Right lobe of liver (tissue), 6 donors: ENCODE measurements at regions of chrX and their contacts with region 1.

Region 1: DNA sequence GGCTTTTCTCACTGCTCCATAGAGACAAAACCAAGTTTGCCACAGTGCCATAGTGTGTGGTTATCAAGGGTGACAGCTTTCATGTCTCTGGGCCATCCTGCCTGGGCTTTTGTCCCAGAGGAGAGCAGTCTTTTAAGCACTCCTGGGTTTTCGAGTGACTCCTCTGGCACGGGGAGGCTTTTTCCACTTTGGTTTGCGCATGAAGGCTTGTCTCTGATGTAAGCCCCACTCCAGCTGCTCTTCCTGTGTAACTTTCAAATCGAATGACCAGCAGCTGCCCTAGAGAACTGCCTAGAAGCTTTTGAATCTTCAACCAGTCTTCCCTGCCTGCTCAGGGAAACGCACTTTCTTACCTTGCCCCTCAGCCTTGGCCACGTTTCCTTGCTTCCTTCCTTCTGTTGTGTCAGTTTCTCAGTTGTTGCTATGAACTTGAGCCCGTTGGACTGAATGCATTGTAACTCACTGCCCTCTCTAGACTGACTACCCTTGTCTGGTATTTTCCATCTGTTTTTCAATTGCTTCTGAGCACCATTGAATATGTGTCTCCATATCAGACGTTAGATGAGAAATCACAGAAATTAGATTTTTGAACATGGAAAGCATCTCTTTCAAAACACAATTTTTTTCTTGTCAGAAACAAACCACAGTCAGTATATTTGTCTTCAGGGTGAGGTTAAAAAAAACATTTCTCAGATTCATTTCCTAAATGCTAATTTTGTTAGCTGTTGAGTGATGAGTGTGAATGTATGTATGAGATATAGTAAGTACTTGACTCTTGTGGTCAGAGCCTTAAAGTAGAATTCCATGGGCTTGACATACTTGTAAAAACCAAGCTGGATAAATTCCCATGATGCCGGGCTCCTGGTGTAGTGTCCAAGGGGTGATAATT is 45.3 kb downstream of the SLC9A6 start:
- DNase-seq: no peak
- ATAC-seq: peak; percentile 29 to 70 (median 48)
- H3K4me3 ChIP-seq: no peak overlapping the region
- H3K27ac ChIP-seq: peak overlapping the region in 1 of 3 donors; percentile 3
- H3K4me1 ChIP-seq: no peaks in the 10 kb centered on the region
- H3K27me3 ChIP-seq: no peaks in the 10 kb centered on the region
- CTCF ChIP-seq: no peak
- POLR2A ChIP-seq: no peak

Region 2: DNA sequence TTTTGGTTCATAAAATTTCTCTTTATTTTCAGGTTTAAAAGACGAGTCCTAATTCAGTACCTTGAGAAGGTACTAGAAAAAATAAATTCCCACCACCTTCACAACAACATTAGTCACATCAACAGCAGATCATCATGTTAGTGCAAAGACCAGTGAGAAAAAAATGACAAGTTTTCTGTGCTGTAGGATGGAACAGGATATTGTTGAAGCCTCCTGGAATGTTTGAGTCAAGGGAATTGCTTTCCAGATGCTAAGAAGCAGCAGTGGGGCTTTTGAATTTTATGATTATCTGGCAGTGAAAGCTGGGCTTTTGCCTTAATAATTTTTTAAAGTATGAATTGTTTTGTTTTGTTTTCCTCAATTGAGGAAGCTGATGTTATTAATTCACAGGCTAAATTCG is 449.1 kb before region 1 on chrX:
- intact Hi-C with region 1: no loop called
- DNase-seq: no peak
- ATAC-seq: no peak
- H3K4me3 ChIP-seq: no peak overlapping the region
- H3K27ac ChIP-seq: no peak overlapping the region
- H3K4me1 ChIP-seq: no peaks in the 10 kb centered on the region
- H3K27me3 ChIP-seq: no peaks in the 10 kb centered on the region
- CTCF ChIP-seq: no peak
- POLR2A ChIP-seq: no peak

Region 3: DNA sequence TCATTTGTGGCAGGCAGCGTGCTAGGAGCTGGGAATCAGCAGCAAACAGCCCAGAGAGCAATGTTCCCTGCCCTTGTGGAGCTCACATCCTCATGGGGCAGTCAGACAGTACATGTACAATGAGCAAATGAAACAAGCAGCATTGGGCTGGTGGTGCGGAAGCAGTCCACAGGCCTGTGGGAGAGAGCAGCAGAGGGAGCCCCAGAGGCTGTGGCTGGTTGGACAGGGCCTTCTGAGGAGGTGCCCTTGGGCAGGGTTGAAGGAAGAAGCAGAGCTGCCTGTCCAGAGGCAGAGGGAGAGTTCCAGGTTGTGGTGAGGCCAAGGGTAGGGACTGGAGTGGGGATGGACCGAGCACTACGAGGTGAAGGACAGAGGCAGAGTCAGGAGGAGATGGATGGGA is 79.3 kb before region 1 on chrX:
- intact Hi-C with region 1: no loop called
- DNase-seq: no peak
- ATAC-seq: peak in 1 of 4 donors; percentile 17
- H3K4me3 ChIP-seq: no peak overlapping the region
- H3K27ac ChIP-seq: no peak overlapping the region
- H3K4me1 ChIP-seq: no peaks in the 10 kb centered on the region
- H3K27me3 ChIP-seq: peaks cover 0 to 2% of the 10 kb centered on the region in 2 donors
- CTCF ChIP-seq: no peak
- POLR2A ChIP-seq: no peak

Region 4: DNA sequence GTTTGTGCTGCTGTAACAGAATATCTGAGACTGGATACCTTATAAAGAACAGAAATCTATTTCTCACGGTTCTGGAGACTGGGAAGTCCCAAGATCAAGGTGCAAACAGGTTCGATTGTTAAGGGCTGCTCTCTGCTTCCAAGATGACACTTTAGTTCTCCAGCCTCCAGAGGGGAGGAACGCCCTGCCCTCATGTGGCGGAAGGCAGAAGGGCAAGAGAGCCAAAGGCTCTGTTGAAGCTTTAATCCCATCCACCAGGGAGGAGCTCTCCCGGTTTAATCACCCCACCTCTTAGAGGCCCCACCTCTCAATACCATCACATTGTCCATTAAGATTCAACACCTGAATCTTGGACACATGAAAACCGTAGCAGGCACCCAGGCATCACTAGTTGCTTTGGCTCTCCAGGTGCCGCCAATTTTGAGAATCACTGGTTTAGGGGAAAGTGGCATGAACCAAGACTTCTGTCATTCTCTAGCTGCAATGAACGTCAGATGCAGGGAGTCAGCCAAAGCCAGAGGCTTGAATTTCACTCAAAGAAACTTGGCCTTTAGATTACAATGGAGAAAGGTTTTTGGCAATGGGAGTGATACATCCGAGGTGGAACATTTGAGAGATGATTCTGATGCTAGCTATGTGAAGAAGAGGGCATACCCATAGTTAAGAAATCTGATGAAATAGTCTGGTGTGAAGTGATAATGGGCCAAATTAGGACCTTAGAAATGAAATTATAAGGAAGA is 132.5 kb after region 1 on chrX:
- intact Hi-C with region 1: loop called in 1 of 2 experiments (anchors 10 kb)
- DNase-seq: peak in 2 of 3 donors; percentile 52 to 57
- ATAC-seq: peak; percentile 75 to 83 (median 78)
- H3K4me3 ChIP-seq: no peak overlapping the region
- H3K27ac ChIP-seq: no peak overlapping the region
- H3K4me1 ChIP-seq: no peaks in the 10 kb centered on the region
- H3K27me3 ChIP-seq: no peaks in the 10 kb centered on the region
- CTCF ChIP-seq: peak; percentile 65 to 77 (median 72)
- POLR2A ChIP-seq: no peak

Region 5: DNA sequence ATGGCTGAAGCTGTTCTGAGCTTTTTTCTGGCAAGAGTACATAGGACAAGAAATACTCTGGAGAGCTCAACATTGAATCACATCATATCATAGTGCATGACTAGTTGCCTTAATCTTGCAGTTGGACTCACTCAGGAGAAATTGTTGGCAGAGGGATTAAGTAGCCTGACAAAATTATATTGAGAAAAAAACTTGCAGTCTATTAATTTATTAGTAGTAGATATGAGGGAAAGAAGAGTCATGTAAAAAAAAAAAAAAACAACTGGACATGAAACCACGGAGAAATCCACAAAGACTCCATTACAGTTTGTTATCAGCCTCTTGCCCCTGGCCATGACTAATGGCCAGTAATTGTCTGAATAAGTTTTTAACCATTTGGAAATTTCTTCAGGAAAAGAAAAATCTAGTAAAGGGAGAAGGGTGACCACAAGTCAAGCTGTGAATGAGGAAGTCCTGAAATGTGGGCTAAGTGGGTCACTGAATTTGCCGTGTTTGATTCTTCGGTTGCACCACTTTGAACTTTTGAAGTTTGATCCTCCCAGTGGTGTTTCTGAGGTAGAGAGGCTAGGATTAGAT is 162.4 kb after region 1 on chrX:
- intact Hi-C with region 1: no loop called
- DNase-seq: no peak
- ATAC-seq: peak in 3 of 4 donors; percentile 7 to 42 (median 15)
- H3K4me3 ChIP-seq: no peak overlapping the region
- H3K27ac ChIP-seq: no peak overlapping the region
- H3K4me1 ChIP-seq: peaks cover 0 to 21% (median 3%) of the 10 kb centered on the region in 4 donors
- H3K27me3 ChIP-seq: no peaks in the 10 kb centered on the region
- CTCF ChIP-seq: no peak
- POLR2A ChIP-seq: no peak

Region 6: GRCh38 chrX:136220535-136220934 is 190.0 kb after region 1 on chrX:
- intact Hi-C with region 1: no loop called
- DNase-seq: no peak
- ATAC-seq: no peak
- H3K4me3 ChIP-seq: no peak overlapping the region
- H3K27ac ChIP-seq: no peak overlapping the region
- H3K4me1 ChIP-seq: no peaks in the 10 kb centered on the region
- H3K27me3 ChIP-seq: peaks cover 0 to 4% of the 10 kb centered on the region in 2 donors
- CTCF ChIP-seq: no peak
- POLR2A ChIP-seq: no peak